ENCODE measurements at regions of chr1 and their contacts with region 1.

Region 1: DNA sequence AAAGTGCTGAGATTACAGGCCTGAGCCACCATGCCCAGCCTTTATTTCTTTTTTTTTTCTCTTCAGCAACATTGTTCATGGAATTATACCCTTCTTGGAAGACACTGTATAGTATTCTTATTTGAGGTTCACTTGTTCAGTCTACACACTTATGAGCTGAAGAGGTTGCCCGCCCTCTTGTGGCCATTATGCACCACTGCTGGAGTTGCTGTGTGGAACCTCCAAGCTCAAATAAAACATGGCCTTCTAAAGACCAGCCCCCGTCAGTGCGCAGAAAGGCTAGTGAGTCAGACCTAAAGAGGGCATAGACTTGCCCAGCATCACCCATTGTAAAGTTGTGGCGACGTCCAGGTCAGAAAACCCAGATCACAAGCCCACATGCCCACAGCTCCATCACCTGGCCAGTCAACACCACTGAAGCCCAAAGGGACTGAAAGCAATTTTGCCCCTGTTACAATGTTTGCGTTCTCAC is 20.4 kb downstream of the LURAP1 start:
- DNase-seq: peak; percentile 76
- H3K4me3 Mint-ChIP-seq: no peak overlapping the region
- H3K27ac Mint-ChIP-seq: no peak overlapping the region
- H3K4me1 Mint-ChIP-seq: peaks cover 1% of the 10 kb centered on the region
- H3K27me3 Mint-ChIP-seq: no peaks in the 10 kb centered on the region

Region 2: DNA sequence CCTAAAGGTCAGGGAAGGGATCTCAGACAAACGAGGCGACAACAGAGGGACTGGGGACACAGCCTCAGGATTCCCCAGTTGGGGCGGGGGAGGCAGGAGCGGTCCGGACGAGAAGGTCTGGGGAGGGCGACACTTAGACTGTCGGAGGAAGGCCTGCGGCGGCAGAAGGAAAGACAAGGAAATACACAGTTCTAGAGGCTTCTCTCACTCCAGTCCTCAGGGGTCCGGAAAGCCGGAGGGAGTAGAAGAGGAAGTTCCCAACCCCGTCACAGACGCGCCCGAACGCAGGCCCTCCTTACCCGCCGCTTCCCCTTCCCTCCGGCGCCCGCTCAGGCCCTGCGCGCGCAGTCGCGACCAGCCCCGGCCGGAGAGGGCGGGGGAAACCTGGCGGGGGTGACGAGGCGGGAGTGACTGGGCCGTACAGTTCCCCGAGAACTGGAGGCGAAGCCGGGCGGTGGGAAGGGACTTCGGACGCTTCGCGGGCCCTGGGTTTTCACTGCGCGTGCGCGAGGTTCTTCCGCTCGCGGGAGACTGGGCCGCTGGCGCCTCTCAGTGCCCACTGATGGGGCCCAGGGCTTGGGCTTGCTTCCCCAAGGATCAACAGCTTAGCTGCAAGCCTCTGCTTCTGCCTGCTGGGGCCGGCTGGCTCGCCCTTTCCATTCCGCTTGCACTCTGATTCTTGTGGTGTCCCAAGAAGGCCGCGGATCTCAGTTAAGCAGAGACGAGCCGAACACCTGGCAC is 473.0 kb before region 1 on chr1 and contains the start of gene IPP:
- CTCF ChIA-PET with region 1: no interaction called
- POLR2A ChIA-PET with region 1: no interaction called
- intact Hi-C with region 1: no loop called
- DNase-seq: peak; percentile 97
- H3K4me3 Mint-ChIP-seq: peak within 1 kb of the TSS; percentile 91
- H3K27ac Mint-ChIP-seq: peak within 1 kb of the TSS; percentile 95
- H3K4me1 Mint-ChIP-seq: peaks cover 33% of the 10 kb centered on the region
- H3K27me3 Mint-ChIP-seq: no peaks in the 10 kb centered on the region
- total RNA-seq, gene IPP: 21.4 to 22.9 TPM

Region 3: DNA sequence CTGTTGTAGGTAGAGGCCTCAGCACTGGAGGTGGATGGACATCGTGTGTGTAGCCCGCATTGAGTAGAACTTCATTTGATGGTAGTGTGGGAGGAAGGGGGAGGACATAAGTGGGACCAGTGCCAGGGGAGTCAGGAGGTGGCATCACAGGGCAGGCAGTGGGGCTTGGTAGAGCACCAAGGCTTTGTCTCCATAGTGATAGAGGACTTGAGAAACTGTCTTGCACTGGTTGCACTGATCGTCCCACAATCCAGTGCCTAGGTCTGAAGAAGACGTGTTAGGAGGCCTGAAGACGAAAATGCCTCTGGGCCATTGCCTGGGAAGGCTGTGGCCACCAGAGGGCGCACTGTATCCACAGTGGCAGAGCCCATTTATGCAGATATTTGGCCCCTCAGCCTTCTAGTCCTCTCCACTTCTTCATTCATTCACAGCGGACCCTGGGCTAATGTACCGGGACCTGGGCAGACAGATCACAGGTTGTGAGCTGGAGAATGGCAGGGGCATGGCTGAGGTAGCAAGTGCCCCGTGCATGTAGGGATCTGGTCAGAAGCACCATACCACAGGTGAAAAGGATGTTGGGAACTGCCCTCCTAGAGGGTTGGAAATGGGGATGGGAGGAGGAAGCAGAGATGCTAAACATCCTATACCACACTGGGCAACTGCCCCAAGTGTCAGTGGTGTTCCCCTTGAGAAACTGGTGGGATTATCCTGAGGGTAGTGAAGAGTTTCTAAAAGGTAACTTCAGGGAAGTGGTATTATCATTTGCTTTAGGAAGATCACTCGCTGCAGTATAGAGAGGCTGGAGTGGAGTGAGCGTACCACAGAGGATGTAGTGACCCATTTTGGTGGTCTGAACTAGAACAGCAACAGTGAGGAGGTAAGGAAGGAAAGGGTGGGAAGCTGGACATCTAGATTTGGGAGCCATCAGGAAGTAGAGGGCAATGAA is 186.3 kb before region 1 on chr1:
- CTCF ChIA-PET with region 1: interaction called, 71 read pairs
- POLR2A ChIA-PET with region 1: no interaction called
- intact Hi-C with region 1: loop called (anchors 1 kb)
- DNase-seq: peak; percentile 88
- H3K4me3 Mint-ChIP-seq: no peak overlapping the region
- H3K27ac Mint-ChIP-seq: no peak overlapping the region
- H3K4me1 Mint-ChIP-seq: no peaks in the 10 kb centered on the region
- H3K27me3 Mint-ChIP-seq: no peaks in the 10 kb centered on the region

Region 4: GRCh38 chr1:46166521-46167462 is 56.7 kb before region 1 on chr1:
- CTCF ChIA-PET with region 1: interaction called, 10 read pairs
- POLR2A ChIA-PET with region 1: no interaction called
- intact Hi-C with region 1: no loop called
- DNase-seq: peak; percentile 63
- H3K4me3 Mint-ChIP-seq: peak overlapping the region; percentile 76
- H3K27ac Mint-ChIP-seq: peak overlapping the region; percentile 72
- H3K4me1 Mint-ChIP-seq: peaks cover 16% of the 10 kb centered on the region
- H3K27me3 Mint-ChIP-seq: peaks cover 2% of the 10 kb centered on the region

Region 5: GRCh38 chr1:46197964-46198811 is 25.3 kb before region 1 on chr1 and contains the start of gene POMGNT1:
- CTCF ChIA-PET with region 1: interaction called, 20 read pairs
- POLR2A ChIA-PET with region 1: interaction called, 3 read pairs
- intact Hi-C with region 1: loop called (anchors 1 kb)
- DNase-seq: peak; percentile 85
- H3K4me3 Mint-ChIP-seq: peak within 1 kb of the TSS; percentile 82
- H3K27ac Mint-ChIP-seq: peak within 1 kb of the TSS; percentile 58
- H3K4me1 Mint-ChIP-seq: peaks cover 26% of the 10 kb centered on the region
- H3K27me3 Mint-ChIP-seq: peaks cover 2% of the 10 kb centered on the region
- total RNA-seq, gene POMGNT1: 43.6 to 44.1 TPM

Region 6: DNA sequence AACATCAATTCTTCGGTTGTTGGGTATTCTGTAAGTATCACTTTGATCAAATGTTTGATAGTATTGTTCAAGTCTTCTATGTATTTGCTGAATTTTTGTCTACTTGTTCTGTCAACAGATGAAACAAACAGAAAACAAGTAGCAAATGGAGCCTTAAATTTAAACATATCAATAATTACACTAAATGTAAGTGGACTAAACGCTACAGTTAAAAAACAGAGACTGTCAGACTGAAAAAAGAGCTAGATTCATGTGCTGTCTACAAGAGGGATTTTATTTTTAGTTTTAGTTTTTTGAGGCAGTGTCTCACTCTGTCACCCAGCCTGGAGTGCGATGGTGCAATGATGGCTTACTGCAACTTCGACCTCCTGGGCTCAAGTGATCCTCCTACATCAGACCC is 13.4 kb after region 1 on chr1:
- CTCF ChIA-PET with region 1: interaction called, 40 read pairs
- POLR2A ChIA-PET with region 1: no interaction called
- intact Hi-C with region 1: no loop called
- DNase-seq: no peak
- H3K4me3 Mint-ChIP-seq: no peak overlapping the region
- H3K27ac Mint-ChIP-seq: no peak overlapping the region
- H3K4me1 Mint-ChIP-seq: no peaks in the 10 kb centered on the region
- H3K27me3 Mint-ChIP-seq: no peaks in the 10 kb centered on the region

Measured in activated CD4-positive, alpha-beta memory T cell treated with anti-CD3 and anti-CD28 coated beads for 36 hours (primary cell).